H1 (cell line): ENCODE measurements at regions of chr6 and their contacts with region 1.

Region 1: GRCh38 chr6:108145639-108146038 is 20.2 kb upstream of the NR2E1 start:
- DNase-seq: no peak
- H3K4me3 ChIP-seq: no peak overlapping the region
- H3K27ac ChIP-seq: no peak overlapping the region
- H3K4me1 ChIP-seq: no peaks in the 10 kb centered on the region
- H3K27me3 ChIP-seq: peaks cover 0 to 7% (median 0%) of the 10 kb centered on the region in 4 experiments; a peak in 1 of 7 replicates
- CTCF ChIP-seq: peak in 1 of 3 experiments; percentile 53; a peak in 1 of 4 replicates
- EP300 ChIP-seq: no peak
- POLR2A ChIP-seq: no peak
- RAD21 ChIP-seq: peak in 1 of 2 experiments; percentile 31; a peak in 2 of 4 replicates

Region 2: GRCh38 chr6:108133594-108134179 is 12.0 kb before region 1 on chr6:
- CTCF ChIA-PET with region 1: interaction called, 30 read pairs
- POLR2A ChIA-PET with region 1: interaction called, 7 read pairs
- DNase-seq: peak; percentile 79 to 91
- H3K4me3 ChIP-seq: peak overlapping the region; percentile 28 to 55 (median 33); a peak in 7 of 8 replicates
- H3K27ac ChIP-seq: no peak overlapping the region
- H3K4me1 ChIP-seq: peaks cover 6 to 12% (median 10%) of the 10 kb centered on the region in 4 experiments; a peak in 6 of 7 replicates
- H3K27me3 ChIP-seq: peaks cover 28 to 69% (median 63%) of the 10 kb centered on the region in 4 experiments
- CTCF ChIP-seq: no peak
- EP300 ChIP-seq: no peak
- POLR2A ChIP-seq: no peak
- RAD21 ChIP-seq: no peak

Region 3: GRCh38 chr6:108157234-108157980 is 11.8 kb after region 1 on chr6:
- CTCF ChIA-PET with region 1: interaction called, 51 read pairs
- POLR2A ChIA-PET with region 1: no interaction called
- DNase-seq: peak in 1 of 2 experiments; percentile 64
- H3K4me3 ChIP-seq: peak overlapping the region in 2 of 4 experiments; percentile 12 to 50; a peak in 3 of 8 replicates
- H3K27ac ChIP-seq: no peak overlapping the region
- H3K4me1 ChIP-seq: peaks cover 6 to 14% (median 10%) of the 10 kb centered on the region in 4 experiments; a peak in 6 of 7 replicates
- H3K27me3 ChIP-seq: peaks cover 70 to 89% (median 81%) of the 10 kb centered on the region in 4 experiments
- CTCF ChIP-seq: no peak
- EP300 ChIP-seq: no peak
- POLR2A ChIP-seq: no peak
- RAD21 ChIP-seq: no peak

Region 4: GRCh38 chr6:108286366-108286765 is 140.7 kb after region 1 on chr6:
- CTCF ChIA-PET with region 1: no interaction called
- POLR2A ChIA-PET with region 1: no interaction called
- DNase-seq: no peak
- H3K4me3 ChIP-seq: no peak overlapping the region
- H3K27ac ChIP-seq: no peak overlapping the region
- H3K4me1 ChIP-seq: no peaks in the 10 kb centered on the region
- H3K27me3 ChIP-seq: no peaks in the 10 kb centered on the region
- CTCF ChIP-seq: no peak
- EP300 ChIP-seq: no peak
- POLR2A ChIP-seq: no peak
- RAD21 ChIP-seq: no peak